ENCODE measurements at regions of chr14 and their contacts with region 1.

Region 1: GRCh38 chr14:60622917-60623257 is 26.4 kb downstream of the SIX1 start:
- DNase-seq: no peak
- ATAC-seq: no peak
- H3K4me3 ChIP-seq: no peak overlapping the region
- H3K27ac ChIP-seq: no peak overlapping the region
- H3K4me1 ChIP-seq: no peaks in the 10 kb centered on the region
- H3K27me3 ChIP-seq: no peaks in the 10 kb centered on the region
- CTCF ChIP-seq: no peak

Region 2: DNA sequence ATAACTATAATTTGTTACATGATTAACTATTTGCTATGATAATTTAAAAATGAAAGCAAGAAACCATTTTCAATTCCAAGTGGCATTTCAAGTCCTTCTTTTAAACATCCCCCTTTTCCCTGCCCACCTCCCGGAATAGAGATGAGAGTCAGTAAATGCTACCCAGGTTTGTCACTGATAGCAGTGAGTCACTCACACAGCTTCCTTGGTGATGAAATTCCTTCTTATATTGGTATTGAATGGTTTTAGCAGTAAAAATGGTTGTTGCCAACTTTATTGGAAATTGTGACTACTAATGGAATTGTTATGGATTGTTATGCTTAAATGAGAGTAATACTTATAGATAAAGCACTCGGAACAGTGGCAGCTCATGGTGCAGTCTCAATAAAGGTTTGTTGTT is 283.3 kb before region 1 on chr14:
- intact Hi-C with region 1: no loop called
- DNase-seq: no peak
- ATAC-seq: no peak
- H3K4me3 ChIP-seq: no peak overlapping the region
- H3K27ac ChIP-seq: no peak overlapping the region
- H3K4me1 ChIP-seq: no peaks in the 10 kb centered on the region
- H3K27me3 ChIP-seq: peaks cover 7% of the 10 kb centered on the region
- CTCF ChIP-seq: no peak

Region 3: DNA sequence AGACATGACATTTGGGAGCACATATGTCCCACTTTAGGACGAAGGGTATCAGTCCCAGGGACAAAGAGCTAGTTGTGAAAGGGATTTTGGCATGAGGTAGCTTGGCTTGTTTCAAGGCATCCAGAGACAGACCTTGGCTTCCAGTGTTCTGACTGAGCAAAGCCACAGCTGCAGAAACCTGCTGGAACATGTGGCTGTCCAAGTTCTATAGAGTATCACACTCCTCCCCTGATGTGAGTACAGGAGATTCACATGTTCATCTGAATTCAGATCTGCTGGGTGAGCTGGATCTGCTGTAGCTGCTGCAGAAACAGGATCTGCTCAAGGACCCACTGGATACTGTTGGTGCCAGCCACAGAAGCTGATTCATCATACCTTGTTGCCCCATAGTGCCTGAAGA is 126.9 kb before region 1 on chr14:
- intact Hi-C with region 1: no loop called
- DNase-seq: no peak
- ATAC-seq: no peak
- H3K4me3 ChIP-seq: no peak overlapping the region
- H3K27ac ChIP-seq: no peak overlapping the region
- H3K4me1 ChIP-seq: no peaks in the 10 kb centered on the region
- H3K27me3 ChIP-seq: peaks cover 15% of the 10 kb centered on the region
- CTCF ChIP-seq: no peak

Region 4: GRCh38 chr14:61252369-61253063 is 629.6 kb after region 1 on chr14:
- intact Hi-C with region 1: loop called (anchors 5 kb)
- DNase-seq: no peak
- ATAC-seq: peak; percentile 99
- H3K4me3 ChIP-seq: no peak overlapping the region
- H3K27ac ChIP-seq: no peak overlapping the region
- H3K4me1 ChIP-seq: no peaks in the 10 kb centered on the region
- H3K27me3 ChIP-seq: no peaks in the 10 kb centered on the region
- CTCF ChIP-seq: peak; percentile 82

Measured in upper lobe of right lung (tissue), 1 donor.